MCF 10A (cell line): ENCODE measurements at regions of chr1 and their contacts with region 1.

Region 1: GRCh38 chr1:113072757-113073478 is at the start of gene LRIG2:
- DNase-seq: peak; percentile 99
- H3K4me3 Mint-ChIP-seq: peak within 1 kb of the TSS; percentile 92
- H3K27ac Mint-ChIP-seq: peak within 1 kb of the TSS; percentile 96
- H3K4me1 Mint-ChIP-seq: peaks cover 15% of the 10 kb centered on the region
- H3K27me3 Mint-ChIP-seq: no peaks in the 10 kb centered on the region
- CTCF ChIP-seq: peak; percentile 88
- total RNA-seq, gene LRIG2: 11.8 and 14.8 TPM in 2 replicates

Region 2: GRCh38 chr1:112803906-112804762 is 268.8 kb before region 1 on chr1:
- CTCF ChIA-PET with region 1: interaction called, 28 read pairs
- POLR2A ChIA-PET with region 1: interaction called, 5 read pairs
- intact Hi-C with region 1: loop called (anchors 10 kb)
- DNase-seq: peak; percentile 78
- H3K4me3 Mint-ChIP-seq: no peak overlapping the region
- H3K27ac Mint-ChIP-seq: no peak overlapping the region
- H3K4me1 Mint-ChIP-seq: peaks cover 3% of the 10 kb centered on the region
- H3K27me3 Mint-ChIP-seq: no peaks in the 10 kb centered on the region
- CTCF ChIP-seq: peak; percentile 84

Region 3: GRCh38 chr1:112876315-112876714 is 196.6 kb before region 1 on chr1:
- CTCF ChIA-PET with region 1: interaction called, 40 read pairs
- POLR2A ChIA-PET with region 1: interaction called, 9 read pairs
- intact Hi-C with region 1: no loop called
- DNase-seq: no peak
- H3K4me3 Mint-ChIP-seq: no peak overlapping the region
- H3K27ac Mint-ChIP-seq: no peak overlapping the region
- H3K4me1 Mint-ChIP-seq: peaks cover 22% of the 10 kb centered on the region
- H3K27me3 Mint-ChIP-seq: no peaks in the 10 kb centered on the region
- CTCF ChIP-seq: no peak

Region 4: DNA sequence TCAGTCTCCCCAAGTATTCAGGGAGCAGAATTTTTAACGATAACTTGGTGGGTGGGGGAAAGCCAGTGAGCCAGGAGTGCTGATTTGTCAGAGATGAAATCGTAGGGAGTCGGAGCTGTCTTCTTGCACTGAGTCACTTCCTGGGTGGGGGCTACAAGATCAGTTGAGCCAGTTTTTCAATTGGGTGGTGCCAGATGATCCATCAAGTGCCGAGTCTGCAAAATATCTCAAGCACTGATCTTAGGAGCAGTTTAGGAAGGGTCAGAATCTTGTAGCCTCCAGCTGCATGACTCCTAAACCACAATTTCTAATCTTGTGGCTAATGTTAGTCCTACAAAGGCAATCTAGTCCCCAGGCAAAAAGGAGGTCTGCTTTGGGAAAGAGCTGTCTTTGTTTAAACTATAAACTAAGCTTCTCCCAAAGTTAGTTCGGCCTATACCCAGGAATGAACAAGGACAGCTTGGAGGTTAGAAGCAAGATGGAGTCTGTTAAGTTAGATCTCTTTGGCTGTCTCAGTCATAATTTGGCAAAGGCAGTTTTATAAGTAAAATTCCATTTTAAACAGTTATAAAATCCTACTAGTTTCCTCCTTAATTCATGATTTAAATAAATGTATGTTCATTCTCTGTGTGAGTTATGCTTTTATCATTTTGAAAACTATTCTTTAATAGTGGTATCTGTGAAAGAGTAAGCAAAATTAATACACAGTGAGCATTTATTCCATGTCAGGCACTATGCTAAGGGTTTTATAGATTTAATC is 168.7 kb before region 1 on chr1:
- CTCF ChIA-PET with region 1: interaction called, 9 read pairs
- POLR2A ChIA-PET with region 1: interaction called, 10 read pairs
- intact Hi-C with region 1: no loop called
- DNase-seq: peak; percentile 89
- H3K4me3 Mint-ChIP-seq: peak overlapping the region; percentile 24
- H3K27ac Mint-ChIP-seq: peak overlapping the region; percentile 92
- H3K4me1 Mint-ChIP-seq: peaks cover 35% of the 10 kb centered on the region
- H3K27me3 Mint-ChIP-seq: no peaks in the 10 kb centered on the region
- CTCF ChIP-seq: no peak

Region 5: GRCh38 chr1:113021430-113022086 is 51.4 kb before region 1 on chr1:
- CTCF ChIA-PET with region 1: interaction called, 14 read pairs
- POLR2A ChIA-PET with region 1: interaction called, 5 read pairs
- intact Hi-C with region 1: no loop called
- DNase-seq: peak; percentile 86
- H3K4me3 Mint-ChIP-seq: peak overlapping the region; percentile 32
- H3K27ac Mint-ChIP-seq: peak overlapping the region; percentile 90
- H3K4me1 Mint-ChIP-seq: peaks cover 10% of the 10 kb centered on the region
- H3K27me3 Mint-ChIP-seq: no peaks in the 10 kb centered on the region
- CTCF ChIP-seq: no peak

Region 6: DNA sequence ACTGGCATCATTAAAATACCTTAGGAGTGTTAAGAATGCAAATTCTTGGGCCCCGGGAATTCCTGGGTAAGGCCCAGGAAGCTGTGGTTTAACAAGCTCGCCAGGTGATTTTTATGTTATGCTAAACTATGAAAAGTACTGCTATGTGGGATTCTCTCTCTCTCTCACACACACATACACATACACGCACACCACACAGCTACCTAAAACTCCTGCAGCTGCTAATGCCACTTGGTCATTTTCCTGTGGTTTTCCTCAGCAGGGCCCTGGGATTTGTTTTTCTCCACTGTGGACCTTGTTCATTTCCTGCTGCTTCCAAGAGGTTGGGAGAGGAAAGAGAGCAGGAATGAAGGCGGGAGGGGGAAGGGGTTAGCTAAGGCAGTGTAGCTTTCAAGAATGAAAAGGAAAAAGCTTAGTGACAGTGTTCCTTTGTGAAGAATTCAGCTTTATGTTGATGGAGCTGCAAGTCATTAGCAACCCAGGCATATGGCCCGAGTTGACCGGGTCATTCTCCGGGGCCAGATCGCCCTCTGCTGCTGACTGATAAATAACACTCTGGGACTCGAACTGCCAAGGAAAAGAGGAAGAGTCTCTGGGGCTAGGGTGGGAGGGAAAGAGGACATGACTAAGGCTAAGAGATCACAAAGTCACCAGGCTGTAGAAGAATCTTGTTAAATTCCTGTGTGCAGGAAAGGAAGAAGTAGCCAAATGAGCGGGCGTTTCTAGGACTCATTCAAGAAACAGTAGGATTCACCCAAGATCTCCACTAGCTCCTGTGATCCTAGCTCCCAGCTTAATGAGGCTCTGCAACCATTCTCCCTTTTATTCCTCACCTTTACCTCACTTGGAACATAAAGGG is 30.4 kb before region 1 on chr1:
- CTCF ChIA-PET with region 1: interaction called, 46 read pairs
- POLR2A ChIA-PET with region 1: interaction called, 11 read pairs
- intact Hi-C with region 1: no loop called
- DNase-seq: peak; percentile 85
- H3K4me3 Mint-ChIP-seq: no peak overlapping the region
- H3K27ac Mint-ChIP-seq: no peak overlapping the region
- H3K4me1 Mint-ChIP-seq: peaks cover 14% of the 10 kb centered on the region
- H3K27me3 Mint-ChIP-seq: no peaks in the 10 kb centered on the region
- CTCF ChIP-seq: peak; percentile 64

Region 7: GRCh38 chr1:113088972-113089371 is 16.1 kb after region 1 on chr1:
- CTCF ChIA-PET with region 1: interaction called, 24 read pairs
- POLR2A ChIA-PET with region 1: interaction called, 8 read pairs
- intact Hi-C with region 1: no loop called
- DNase-seq: no peak
- H3K4me3 Mint-ChIP-seq: no peak overlapping the region
- H3K27ac Mint-ChIP-seq: no peak overlapping the region
- H3K4me1 Mint-ChIP-seq: peaks cover 8% of the 10 kb centered on the region
- H3K27me3 Mint-ChIP-seq: no peaks in the 10 kb centered on the region
- CTCF ChIP-seq: no peak

Region 8: GRCh38 chr1:113616156-113616555 is 543.2 kb after region 1 on chr1:
- CTCF ChIA-PET with region 1: no interaction called
- POLR2A ChIA-PET with region 1: no interaction called
- intact Hi-C with region 1: no loop called
- DNase-seq: no peak
- H3K4me3 Mint-ChIP-seq: no peak overlapping the region
- H3K27ac Mint-ChIP-seq: no peak overlapping the region
- H3K4me1 Mint-ChIP-seq: peaks cover 12% of the 10 kb centered on the region
- H3K27me3 Mint-ChIP-seq: no peaks in the 10 kb centered on the region
- CTCF ChIP-seq: no peak